A673 (cell line): ENCODE measurements at regions of chr18 and their contacts with region 1.

Region 1: GRCh38 chr18:53417003-53417402 is 807.5 kb downstream of the MBD2 start:
- DNase-seq: peak; percentile 84
- H3K4me3 ChIP-seq: no peak overlapping the region
- H3K27ac ChIP-seq: no peak overlapping the region
- H3K4me1 ChIP-seq: peaks cover 23% of the 10 kb centered on the region
- H3K27me3 ChIP-seq: no peaks in the 10 kb centered on the region
- CTCF ChIP-seq: no peak

Region 2: GRCh38 chr18:53402670-53403069 is 14.3 kb before region 1 on chr18:
- CTCF ChIA-PET with region 1: no interaction called
- POLR2A ChIA-PET with region 1: interaction called, 10 read pairs
- intact Hi-C with region 1: no loop called
- DNase-seq: no peak
- H3K4me3 ChIP-seq: no peak overlapping the region
- H3K27ac ChIP-seq: no peak overlapping the region
- H3K4me1 ChIP-seq: no peaks in the 10 kb centered on the region
- H3K27me3 ChIP-seq: no peaks in the 10 kb centered on the region
- CTCF ChIP-seq: no peak

Region 3: GRCh38 chr18:53441761-53442414 is 24.9 kb after region 1 on chr18:
- CTCF ChIA-PET with region 1: no interaction called
- POLR2A ChIA-PET with region 1: no interaction called
- intact Hi-C with region 1: no loop called
- DNase-seq: peak; percentile 67
- H3K4me3 ChIP-seq: no peak overlapping the region
- H3K27ac ChIP-seq: no peak overlapping the region
- H3K4me1 ChIP-seq: peaks cover 13% of the 10 kb centered on the region
- H3K27me3 ChIP-seq: no peaks in the 10 kb centered on the region
- CTCF ChIP-seq: no peak